ENCODE measurements at regions of chr14 and their contacts with region 1.

Region 1: DNA sequence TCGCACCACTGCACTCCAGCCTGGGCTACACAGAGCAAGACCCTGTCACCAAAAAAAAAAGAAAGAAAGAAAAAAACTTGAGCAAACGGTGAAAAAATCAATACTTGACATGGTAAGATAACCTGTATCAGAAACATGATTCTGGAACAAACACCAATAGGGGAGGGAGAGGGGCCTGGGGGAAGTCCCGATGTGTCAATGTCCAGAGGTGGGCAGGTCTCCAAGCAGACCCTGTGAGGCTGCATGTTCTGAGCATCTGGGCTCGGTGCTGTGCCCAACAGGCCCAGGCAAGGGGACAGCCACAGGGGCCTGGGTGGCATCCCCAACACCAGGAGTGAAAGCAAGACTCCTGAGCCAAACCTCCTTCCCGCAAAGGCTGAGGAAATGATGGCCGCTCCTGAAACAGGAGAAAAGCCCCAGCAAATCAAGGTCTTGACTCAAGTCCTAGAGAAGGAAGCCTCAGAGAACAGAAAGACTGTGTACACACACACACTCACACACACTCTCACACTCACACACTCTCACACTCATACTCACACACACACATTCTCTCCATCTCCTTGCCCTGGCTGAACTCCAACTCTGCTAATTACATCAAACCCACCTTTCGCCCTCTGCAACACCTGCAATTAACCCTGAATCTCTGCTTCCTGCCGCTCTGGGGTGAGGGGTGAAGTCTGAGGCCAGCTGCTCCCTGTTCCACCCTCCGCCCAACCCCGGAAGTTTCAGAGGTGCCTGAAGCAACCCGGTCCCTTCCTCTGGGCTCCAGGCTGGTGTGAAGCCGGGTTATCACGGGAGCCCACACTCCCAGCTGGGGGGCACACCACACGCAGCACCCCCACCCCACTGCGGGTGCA is 20.4 kb downstream of the CCDC88C start:
- DNase-seq: peak in 8 of 9 donors; percentile 61 to 77 (median 71)
- ATAC-seq: peak; percentile 68
- H3K4me3 ChIP-seq: peak overlapping the region; percentile 43
- H3K4me3 Mint-ChIP-seq: peak overlapping the region; percentile 73 to 99 (median 86)
- H3K27ac ChIP-seq: peak overlapping the region; percentile 76
- H3K27ac Mint-ChIP-seq: peak overlapping the region; percentile 77 to 99 (median 89)
- H3K4me1 ChIP-seq: peaks cover 88 to 90% of the 10 kb centered on the region in 2 donors
- H3K4me1 Mint-ChIP-seq: peaks cover 80 to 98% (median 91%) of the 10 kb centered on the region in 7 donors
- H3K27me3 ChIP-seq: no peaks in the 10 kb centered on the region
- H3K27me3 Mint-ChIP-seq: no peaks in the 10 kb centered on the region

Region 2: DNA sequence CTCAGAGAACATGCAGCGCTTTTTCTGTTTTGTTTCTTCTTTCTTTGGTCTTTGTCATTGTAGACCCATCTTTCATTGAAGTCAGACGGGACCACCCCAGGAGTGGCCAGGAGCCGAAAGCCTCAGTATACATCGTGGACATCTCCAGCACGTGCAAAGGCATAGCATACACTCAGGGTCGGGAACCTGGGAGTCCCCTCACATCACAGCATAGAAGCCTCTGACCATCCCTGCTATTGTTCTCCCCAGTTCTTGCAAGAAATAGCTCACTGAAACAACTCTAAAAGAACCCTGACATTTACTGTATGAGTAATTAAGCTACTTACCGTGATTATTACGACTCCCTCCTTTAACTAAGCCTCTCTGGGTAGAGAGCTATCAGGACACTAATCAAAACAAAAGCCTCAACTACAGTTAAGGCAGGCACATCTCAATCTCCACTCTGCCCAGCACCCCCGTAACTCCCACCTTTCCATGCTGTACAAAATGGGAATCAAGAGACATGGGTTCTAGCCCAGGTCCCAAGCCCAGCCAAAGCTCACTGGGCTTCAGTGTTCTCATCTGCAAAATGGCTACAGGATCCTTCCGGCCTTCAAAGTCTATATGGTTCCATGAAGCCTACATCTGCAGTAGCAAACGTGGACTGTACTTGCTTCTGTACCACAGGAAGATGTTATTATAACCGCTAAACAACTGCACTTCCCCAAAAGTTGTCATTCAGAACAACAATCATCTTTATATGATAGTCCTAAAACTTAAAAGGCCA is 13.8 kb after region 1 on chr14:
- CTCF ChIA-PET with region 1: interaction called, 30 read pairs
- POLR2A ChIA-PET with region 1: interaction called, 328 read pairs
- intact Hi-C with region 1: loop called (anchors 1 kb)
- DNase-seq: peak in 1 of 9 donors; percentile 18
- ATAC-seq: no peak
- H3K4me3 ChIP-seq: peak overlapping the region; percentile 11
- H3K4me3 Mint-ChIP-seq: peak overlapping the region; percentile 76 to 100 (median 85)
- H3K27ac ChIP-seq: peak overlapping the region; percentile 95
- H3K27ac Mint-ChIP-seq: peak overlapping the region; percentile 89 to 99 (median 95)
- H3K4me1 ChIP-seq: peaks cover 80 to 86% of the 10 kb centered on the region in 2 donors
- H3K4me1 Mint-ChIP-seq: peaks cover 69 to 94% (median 89%) of the 10 kb centered on the region in 7 donors
- H3K27me3 ChIP-seq: no peaks in the 10 kb centered on the region
- H3K27me3 Mint-ChIP-seq: no peaks in the 10 kb centered on the region